Activated naive CD4-positive, alpha-beta T cell treated with anti-CD3 and anti-CD28 coated beads for 36 hours (primary cell): ENCODE measurements at regions of chr7 and their contacts with region 1.

Region 1: DNA sequence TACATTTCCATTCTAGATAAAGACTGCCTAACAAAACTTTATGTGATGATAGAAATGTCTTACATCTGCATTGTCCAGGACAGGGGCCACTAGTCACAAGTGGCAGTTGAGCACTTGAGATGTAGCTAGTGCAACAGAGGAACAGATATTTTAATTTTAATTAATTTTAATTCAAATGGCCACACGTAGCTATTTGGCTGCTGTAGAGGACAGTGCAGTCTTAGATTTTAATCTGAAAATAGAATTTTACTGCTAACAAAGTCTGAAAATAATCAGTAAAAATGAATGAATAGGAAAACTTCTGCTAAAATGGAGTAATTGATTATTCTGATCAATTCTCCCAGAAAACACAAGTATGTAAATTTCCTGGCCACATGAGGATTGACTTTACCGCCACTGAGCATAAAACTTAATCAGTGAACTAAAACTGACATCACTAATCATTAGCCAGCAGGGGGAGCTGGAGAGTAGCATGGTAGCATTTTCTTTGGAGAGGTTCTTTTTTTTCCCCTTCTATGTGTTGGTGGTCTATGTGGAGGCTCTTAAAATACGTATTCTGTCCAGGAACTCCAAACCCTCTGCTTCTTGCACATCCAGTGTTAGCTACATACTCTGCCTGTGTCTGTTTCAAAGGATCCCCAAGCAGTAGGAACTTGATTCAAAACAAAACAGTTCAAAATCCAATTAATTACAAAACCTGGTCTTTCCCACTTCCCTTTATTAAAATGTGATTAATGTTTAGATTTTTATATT is 52.1 kb downstream of the TSPAN12 start:
- DNase-seq: peak; percentile 67
- H3K4me3 Mint-ChIP-seq: no peak overlapping the region
- H3K27ac Mint-ChIP-seq: no peak overlapping the region
- H3K4me1 Mint-ChIP-seq: no peaks in the 10 kb centered on the region
- H3K27me3 Mint-ChIP-seq: peaks cover 5% of the 10 kb centered on the region

Region 2: GRCh38 chr7:120792091-120792860 is 13.5 kb before region 1 on chr7:
- CTCF ChIA-PET with region 1: interaction called, 42 read pairs
- intact Hi-C with region 1: no loop called
- DNase-seq: peak; percentile 72
- H3K4me3 Mint-ChIP-seq: no peak overlapping the region
- H3K27ac Mint-ChIP-seq: no peak overlapping the region
- H3K4me1 Mint-ChIP-seq: no peaks in the 10 kb centered on the region
- H3K27me3 Mint-ChIP-seq: no peaks in the 10 kb centered on the region

Region 3: DNA sequence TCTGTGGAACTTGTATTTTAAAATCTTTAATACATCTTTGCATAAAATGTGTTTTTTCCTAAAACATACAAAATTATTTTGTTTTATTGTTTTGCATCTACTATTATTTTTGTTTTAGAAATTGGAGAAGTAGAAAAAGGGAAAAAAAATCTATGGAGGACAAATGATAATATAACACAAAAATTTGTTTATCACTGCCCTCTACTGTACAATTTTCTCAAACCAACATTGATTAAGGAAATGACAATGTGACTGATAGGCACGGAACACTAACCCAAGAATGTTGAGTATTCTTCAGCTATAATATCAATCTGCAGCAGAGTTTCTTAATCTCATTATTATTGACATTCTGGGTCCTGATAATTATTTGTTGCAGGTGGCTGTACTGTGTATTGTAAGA is 135.3 kb after region 1 on chr7:
- CTCF ChIA-PET with region 1: interaction called, 6 read pairs
- intact Hi-C with region 1: loop called (anchors 1 kb)
- DNase-seq: no peak
- H3K4me3 Mint-ChIP-seq: no peak overlapping the region
- H3K27ac Mint-ChIP-seq: no peak overlapping the region
- H3K4me1 Mint-ChIP-seq: no peaks in the 10 kb centered on the region
- H3K27me3 Mint-ChIP-seq: no peaks in the 10 kb centered on the region

Region 4: GRCh38 chr7:121069346-121070100 is 263.7 kb after region 1 on chr7:
- CTCF ChIA-PET with region 1: no interaction called
- intact Hi-C with region 1: no loop called
- DNase-seq: no peak
- H3K4me3 Mint-ChIP-seq: no peak overlapping the region
- H3K27ac Mint-ChIP-seq: no peak overlapping the region
- H3K4me1 Mint-ChIP-seq: no peaks in the 10 kb centered on the region
- H3K27me3 Mint-ChIP-seq: peaks cover 2% of the 10 kb centered on the region

Region 5: GRCh38 chr7:121081327-121081936 is 275.6 kb after region 1 on chr7:
- CTCF ChIA-PET with region 1: interaction called, 19 read pairs
- intact Hi-C with region 1: loop called (anchors 1 kb)
- DNase-seq: no peak
- H3K4me3 Mint-ChIP-seq: no peak overlapping the region
- H3K27ac Mint-ChIP-seq: no peak overlapping the region
- H3K4me1 Mint-ChIP-seq: no peaks in the 10 kb centered on the region
- H3K27me3 Mint-ChIP-seq: peaks cover 6% of the 10 kb centered on the region

Region 6: DNA sequence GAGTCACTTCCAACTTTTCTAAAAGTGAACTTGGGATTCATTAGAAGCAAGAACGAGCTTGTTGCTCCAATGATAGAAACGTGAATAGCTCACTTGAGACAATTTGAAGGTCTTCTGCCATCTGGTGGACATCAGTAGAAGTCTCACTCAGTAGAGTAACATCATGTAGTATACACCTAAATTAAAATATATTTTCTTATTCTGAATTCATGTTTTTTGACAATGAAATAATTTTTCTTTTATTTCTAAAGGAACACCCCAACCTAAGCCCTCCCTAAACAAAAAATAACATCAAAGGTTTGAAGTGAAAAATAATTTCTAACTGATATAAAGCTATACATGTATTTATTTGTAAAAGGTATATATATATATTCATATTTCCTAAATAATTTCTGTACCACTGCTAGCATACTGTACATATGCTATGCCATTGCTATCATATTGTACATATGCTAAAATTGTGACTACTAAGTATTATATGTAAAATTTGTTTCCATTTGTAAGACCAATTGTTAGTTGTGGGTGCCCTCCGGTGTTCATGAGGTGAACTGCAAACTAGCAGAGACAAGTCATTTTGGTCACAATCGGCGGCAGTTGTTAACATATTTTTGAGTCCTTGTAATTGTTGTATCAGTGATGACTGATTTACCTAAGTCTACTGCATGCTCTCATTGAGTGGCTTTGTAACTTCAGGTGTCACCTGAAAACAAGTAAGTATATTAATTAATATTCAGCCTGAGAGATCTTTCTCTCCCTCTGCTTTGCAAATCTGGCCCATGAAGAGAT is 1189.0 kb after region 1 on chr7:
- CTCF ChIA-PET with region 1: no interaction called
- intact Hi-C with region 1: loop called (anchors 10 kb)
- DNase-seq: peak; percentile 64
- H3K4me3 Mint-ChIP-seq: no peak overlapping the region
- H3K27ac Mint-ChIP-seq: no peak overlapping the region
- H3K4me1 Mint-ChIP-seq: no peaks in the 10 kb centered on the region
- H3K27me3 Mint-ChIP-seq: no peaks in the 10 kb centered on the region